Transverse colon (tissue), 4 donors: ENCODE measurements at regions of chr18 and their contacts with region 1.

Region 1: GRCh38 chr18:63730773-63731172 is 28.0 kb downstream of the SERPINB11 start:
- DNase-seq: no peak
- H3K4me3 ChIP-seq: no peak overlapping the region
- H3K27ac ChIP-seq: no peak overlapping the region
- H3K4me1 ChIP-seq: no peaks in the 10 kb centered on the region
- H3K27me3 ChIP-seq: no peaks in the 10 kb centered on the region
- CTCF ChIP-seq: no peak
- EP300 ChIP-seq: no peak
- POLR2A ChIP-seq: no peak

Region 2: GRCh38 chr18:63590373-63590772 is 140.4 kb before region 1 on chr18:
- in situ Hi-C with region 1: no loop called
- intact Hi-C with region 1: no loop called
- DNase-seq: no peak
- H3K4me3 ChIP-seq: no peak overlapping the region
- H3K27ac ChIP-seq: no peak overlapping the region
- H3K4me1 ChIP-seq: no peaks in the 10 kb centered on the region
- H3K27me3 ChIP-seq: no peaks in the 10 kb centered on the region
- CTCF ChIP-seq: no peak
- EP300 ChIP-seq: no peak
- POLR2A ChIP-seq: no peak

Region 3: GRCh38 chr18:63626438-63626837 is 104.3 kb before region 1 on chr18:
- in situ Hi-C with region 1: no loop called
- intact Hi-C with region 1: no loop called
- DNase-seq: no peak
- H3K4me3 ChIP-seq: no peak overlapping the region
- H3K27ac ChIP-seq: no peak overlapping the region
- H3K4me1 ChIP-seq: no peaks in the 10 kb centered on the region
- H3K27me3 ChIP-seq: no peaks in the 10 kb centered on the region
- CTCF ChIP-seq: no peak
- EP300 ChIP-seq: no peak
- POLR2A ChIP-seq: no peak

Region 4: DNA sequence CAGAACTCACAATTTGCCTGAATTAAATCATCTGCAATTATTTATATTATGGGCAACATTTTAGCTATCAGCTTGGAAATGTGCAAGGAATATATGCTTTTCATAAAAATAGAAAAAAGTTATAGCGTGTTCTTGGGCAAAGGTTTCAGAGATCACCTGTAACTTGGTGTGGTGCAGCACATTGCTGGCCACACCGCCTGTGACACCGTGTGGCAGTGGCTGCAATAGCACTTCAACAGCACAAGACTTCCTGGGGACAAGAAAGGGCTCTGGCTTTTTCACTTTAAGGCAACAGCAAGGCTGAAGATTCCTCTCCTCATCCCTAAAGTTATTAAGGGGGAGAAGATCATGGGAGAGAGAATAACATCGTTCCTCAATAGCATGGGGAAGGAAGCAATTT is 54.2 kb before region 1 on chr18:
- in situ Hi-C with region 1: no loop called
- intact Hi-C with region 1: loop called (anchors 2 kb)
- DNase-seq: no peak
- H3K4me3 ChIP-seq: no peak overlapping the region
- H3K27ac ChIP-seq: no peak overlapping the region
- H3K4me1 ChIP-seq: no peaks in the 10 kb centered on the region
- H3K27me3 ChIP-seq: no peaks in the 10 kb centered on the region
- CTCF ChIP-seq: peak in 1 of 5 experiments; percentile 5
- EP300 ChIP-seq: no peak
- POLR2A ChIP-seq: no peak

Region 5: DNA sequence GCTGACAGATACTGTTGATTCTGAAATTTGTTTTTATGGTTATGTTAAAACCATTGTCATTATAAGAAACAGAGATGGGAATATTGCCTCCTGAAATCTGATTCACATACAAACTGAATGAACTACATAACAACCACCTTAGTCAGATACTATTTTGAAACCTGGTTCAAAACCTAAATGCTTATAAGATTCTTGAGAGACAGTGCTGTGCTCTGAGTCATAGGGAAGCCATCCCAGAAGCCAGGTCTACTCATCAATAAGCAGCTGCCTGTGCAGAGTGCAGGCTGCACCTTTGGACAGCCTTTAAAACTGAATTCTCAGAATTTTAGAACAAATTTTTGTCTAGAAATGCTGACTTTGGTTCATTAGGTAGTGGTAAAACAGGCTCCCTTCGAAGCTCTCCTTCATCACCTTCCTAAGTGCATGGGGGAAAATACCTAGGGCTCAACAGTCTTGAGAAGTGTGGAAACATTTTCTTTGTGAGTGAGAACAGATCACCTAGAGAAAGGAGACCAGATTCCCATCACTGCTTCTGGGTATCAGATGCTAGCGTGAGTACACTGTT is 44.5 kb after region 1 on chr18 and contains the start of gene SERPINB7:
- in situ Hi-C with region 1: no loop called
- intact Hi-C with region 1: no loop called
- DNase-seq: no peak
- H3K4me3 ChIP-seq: no peak within 1 kb of the TSS
- H3K27ac ChIP-seq: no peak within 1 kb of the TSS
- H3K4me1 ChIP-seq: no peaks in the 10 kb centered on the region
- H3K27me3 ChIP-seq: no peaks in the 10 kb centered on the region
- CTCF ChIP-seq: no peak
- EP300 ChIP-seq: no peak
- POLR2A ChIP-seq: no peak
- total RNA-seq, gene SERPINB7: not detected